ENCODE measurements at regions of chr14 and their contacts with region 1.

Region 1: GRCh38 chr14:103104654-103105452 is 10.3 kb downstream of the EXOC3L4 start:
- DNase-seq: peak; percentile 81
- ATAC-seq: peak; percentile 87

Region 2: GRCh38 chr14:103185051-103185992 is 80.5 kb after region 1 on chr14:
- intact Hi-C with region 1: loop called (anchors 5 kb)
- DNase-seq: no peak
- ATAC-seq: no peak

Region 3: GRCh38 chr14:103292426-103293374 is 187.8 kb after region 1 on chr14:
- intact Hi-C with region 1: loop called (anchors 1 kb)
- DNase-seq: peak; percentile 85
- ATAC-seq: peak; percentile 93